ENCODE measurements at regions of chr4 and their contacts with region 1.

Region 1: GRCh38 chr4:109302361-109303139 is at the start of gene COL25A1:
- DNase-seq: peak; percentile 63
- H3K4me3 Mint-ChIP-seq: peak within 1 kb of the TSS; percentile 74
- H3K27ac Mint-ChIP-seq: no peak within 1 kb of the TSS
- H3K4me1 Mint-ChIP-seq: peaks cover 12% of the 10 kb centered on the region
- H3K27me3 Mint-ChIP-seq: peaks cover 46% of the 10 kb centered on the region
- total RNA-seq, gene COL25A1: not detected

Region 2: DNA sequence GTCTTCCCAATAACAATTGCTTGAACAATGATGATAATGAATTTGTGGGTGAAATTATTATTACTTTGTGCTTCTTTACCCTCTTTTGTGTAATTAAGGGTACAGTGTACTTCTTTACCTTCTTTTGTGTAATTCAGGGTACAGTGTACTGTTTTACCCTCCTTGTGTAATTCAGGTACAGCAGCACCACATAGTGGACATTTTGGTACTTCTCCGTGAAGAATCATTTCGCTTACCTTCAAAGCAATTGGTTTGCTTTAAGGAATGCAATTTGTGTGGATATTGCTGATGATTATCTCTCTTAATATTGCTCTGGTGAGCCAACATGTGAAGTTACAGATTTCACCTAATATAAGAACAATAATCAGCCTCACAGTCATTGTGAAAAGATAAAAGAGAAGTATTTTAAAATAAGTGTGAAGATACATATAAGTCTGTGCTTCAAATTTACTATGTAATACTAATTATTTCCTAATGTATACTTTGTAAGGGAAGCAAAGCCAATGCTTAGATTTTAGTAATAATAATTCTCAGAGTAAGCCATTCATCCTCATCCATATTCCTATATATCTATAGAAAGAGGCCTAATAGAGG is 103.9 kb after region 1 on chr4:
- CTCF ChIA-PET with region 1: no interaction called
- intact Hi-C with region 1: loop called (anchors 2 kb)
- DNase-seq: peak; percentile 52
- H3K4me3 Mint-ChIP-seq: no peak overlapping the region
- H3K27ac Mint-ChIP-seq: no peak overlapping the region
- H3K4me1 Mint-ChIP-seq: no peaks in the 10 kb centered on the region
- H3K27me3 Mint-ChIP-seq: no peaks in the 10 kb centered on the region

Measured in activated naive CD4-positive, alpha-beta T cell treated with anti-CD3 and anti-CD28 coated beads for 36 hours (primary cell).